Activated CD4-positive, alpha-beta T cell treated with anti-CD3 and anti-CD28 coated beads for 36 hours (primary cell): ENCODE measurements at regions of chrX and their contacts with region 1.

Region 1: DNA sequence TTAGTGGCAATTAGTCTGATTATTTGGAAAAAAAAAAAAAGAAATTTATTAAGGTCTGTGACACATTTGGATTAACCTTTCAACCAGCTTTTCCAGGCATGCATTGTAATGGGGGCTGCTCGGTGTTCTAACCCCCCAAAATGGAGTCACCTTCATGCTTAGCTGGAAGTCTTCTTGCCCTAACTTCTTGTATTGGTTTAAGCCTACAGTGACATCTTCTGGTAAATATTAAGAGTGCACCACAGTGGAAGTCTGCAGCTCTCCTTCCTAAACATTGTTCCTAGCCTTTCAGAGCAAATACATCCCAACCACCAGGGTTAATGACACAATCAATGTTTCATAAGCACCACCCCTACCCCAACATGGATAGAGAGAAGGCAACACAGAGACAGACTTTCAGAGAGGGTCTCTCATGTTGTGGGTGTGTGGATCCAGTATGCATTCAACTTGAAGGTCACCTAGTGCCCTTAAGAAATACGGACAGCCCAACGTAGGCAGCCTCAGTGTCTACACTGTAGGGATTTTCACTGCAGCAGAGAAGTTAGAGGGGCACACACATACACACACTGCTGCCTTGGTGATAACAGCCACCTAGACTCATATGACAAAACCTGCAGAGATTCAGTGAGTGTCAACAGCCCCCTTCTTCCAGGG is 142.9 kb upstream of the MBNL3 start:
- DNase-seq: no peak
- ATAC-seq: no peak
- H3K4me3 Mint-ChIP-seq: no peak overlapping the region
- H3K27ac Mint-ChIP-seq: no peak overlapping the region
- H3K4me1 Mint-ChIP-seq: no peaks in the 10 kb centered on the region
- H3K27me3 Mint-ChIP-seq: no peaks in the 10 kb centered on the region

Region 2: DNA sequence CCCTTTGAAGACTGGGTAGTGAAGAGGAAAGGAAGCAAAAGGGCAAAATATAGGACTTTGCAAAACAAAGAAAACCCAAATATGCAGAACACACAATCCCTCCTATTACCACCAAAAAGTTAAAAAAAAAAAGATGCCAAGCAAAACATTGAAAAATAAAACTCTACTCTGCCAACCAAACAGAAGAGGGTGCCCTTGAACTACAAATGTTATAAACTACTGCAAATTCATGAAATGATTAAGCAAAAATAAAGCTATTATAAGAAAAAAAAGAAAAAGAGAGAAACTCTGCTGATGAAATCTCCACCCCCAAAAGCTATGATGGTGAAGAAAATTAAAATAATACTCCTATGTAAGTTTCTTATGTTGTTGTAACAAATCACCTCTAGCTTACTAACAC is 777.1 kb before region 1 on chrX:
- CTCF ChIA-PET with region 1: no interaction called
- POLR2A ChIA-PET with region 1: no interaction called
- intact Hi-C with region 1: loop called in 1 of 2 experiments (anchors 5 kb)
- DNase-seq: no peak
- ATAC-seq: no peak
- H3K4me3 Mint-ChIP-seq: no peak overlapping the region
- H3K27ac Mint-ChIP-seq: no peak overlapping the region
- H3K4me1 Mint-ChIP-seq: no peaks in the 10 kb centered on the region
- H3K27me3 Mint-ChIP-seq: no peaks in the 10 kb centered on the region

Region 3: DNA sequence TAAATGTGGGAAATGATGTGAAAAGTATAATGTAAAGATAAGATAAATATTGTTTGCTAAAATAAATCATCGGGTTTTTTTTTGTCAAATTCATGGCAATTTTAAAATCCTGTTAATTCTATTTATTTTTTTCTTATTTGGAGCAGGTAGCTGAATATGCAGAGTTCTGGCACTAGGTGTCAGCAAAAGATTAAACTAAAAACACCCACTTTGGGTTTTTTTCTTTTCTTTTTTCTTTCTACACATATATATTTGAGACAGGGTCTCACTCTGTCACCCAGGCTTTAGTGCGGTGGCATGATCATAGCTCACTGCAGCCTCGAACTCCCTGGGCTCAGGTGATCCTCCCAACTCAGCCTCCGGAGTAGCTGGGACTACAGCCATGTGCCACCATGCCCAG is 405.5 kb before region 1 on chrX:
- CTCF ChIA-PET with region 1: interaction called, 6 read pairs
- POLR2A ChIA-PET with region 1: no interaction called
- intact Hi-C with region 1: loop called in 1 of 2 experiments (anchors 5 kb)
- DNase-seq: no peak
- ATAC-seq: no peak
- H3K4me3 Mint-ChIP-seq: no peak overlapping the region
- H3K27ac Mint-ChIP-seq: no peak overlapping the region
- H3K4me1 Mint-ChIP-seq: peaks cover 21% of the 10 kb centered on the region
- H3K27me3 Mint-ChIP-seq: no peaks in the 10 kb centered on the region

Region 4: DNA sequence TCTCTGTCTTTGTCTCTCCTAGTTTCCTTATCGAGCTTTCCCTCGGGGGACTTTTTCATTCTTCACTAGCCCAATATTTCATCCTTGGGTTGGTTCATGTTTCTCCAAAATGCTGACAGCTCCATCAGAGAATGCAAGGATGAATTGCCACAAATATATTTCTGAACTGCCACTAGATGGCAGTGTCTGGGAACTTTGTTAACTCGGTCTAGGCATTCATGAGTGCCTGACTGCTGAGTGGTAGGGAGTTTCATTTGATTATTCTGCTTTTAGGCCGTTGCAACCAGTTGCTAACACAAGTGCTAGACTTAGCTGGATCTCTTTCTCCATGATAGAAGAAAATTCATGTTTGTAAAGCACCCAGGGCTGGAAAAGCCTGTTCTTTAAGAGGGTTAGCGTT is 338.9 kb before region 1 on chrX:
- CTCF ChIA-PET with region 1: interaction called, 6 read pairs
- POLR2A ChIA-PET with region 1: no interaction called
- intact Hi-C with region 1: loop called (anchors 1 to 2 kb)
- DNase-seq: peak; percentile 28
- ATAC-seq: peak; percentile 39
- H3K4me3 Mint-ChIP-seq: no peak overlapping the region
- H3K27ac Mint-ChIP-seq: no peak overlapping the region
- H3K4me1 Mint-ChIP-seq: no peaks in the 10 kb centered on the region
- H3K27me3 Mint-ChIP-seq: no peaks in the 10 kb centered on the region

Region 5: GRCh38 chrX:132774001-132774714 is 142.5 kb after region 1 on chrX:
- CTCF ChIA-PET with region 1: no interaction called
- POLR2A ChIA-PET with region 1: no interaction called
- intact Hi-C with region 1: no loop called
- DNase-seq: no peak
- ATAC-seq: no peak
- H3K4me3 Mint-ChIP-seq: no peak overlapping the region
- H3K27ac Mint-ChIP-seq: no peak overlapping the region
- H3K4me1 Mint-ChIP-seq: peaks cover 27% of the 10 kb centered on the region
- H3K27me3 Mint-ChIP-seq: no peaks in the 10 kb centered on the region

Region 6: DNA sequence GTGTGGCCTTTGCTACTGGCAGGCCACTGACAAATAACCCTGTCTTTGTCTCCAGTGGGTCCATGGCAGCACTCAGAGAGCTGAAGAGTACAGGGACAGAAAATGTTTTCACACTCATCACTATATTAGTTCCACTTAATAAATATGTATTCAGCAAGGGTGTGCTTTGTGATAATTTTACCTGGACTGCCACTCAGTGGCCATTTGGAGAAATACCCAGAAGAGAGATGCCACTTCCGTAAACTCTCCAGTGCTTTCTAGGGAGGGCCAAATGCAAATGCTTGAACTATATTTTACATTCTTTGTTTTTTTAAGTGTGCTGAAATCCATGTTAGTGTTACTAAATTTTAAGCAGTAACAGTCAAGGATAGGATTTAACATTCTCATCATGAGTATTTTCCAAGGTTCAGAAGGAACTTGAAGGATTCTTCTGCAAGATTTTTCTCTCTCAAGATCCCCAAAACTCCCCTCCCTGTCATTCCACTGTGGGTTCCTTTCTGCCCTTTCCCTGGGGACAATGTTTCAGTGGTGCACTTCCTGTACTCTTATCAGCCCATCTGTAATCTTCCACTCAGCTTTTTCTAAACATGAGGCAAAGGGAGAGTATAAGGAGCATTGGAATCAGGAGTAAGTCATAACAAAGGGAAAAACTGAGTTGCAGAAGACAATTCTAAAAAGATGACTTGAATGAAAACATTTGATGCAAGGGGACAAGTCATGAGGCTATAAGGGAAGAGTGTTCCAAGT is 540.4 kb after region 1 on chrX:
- CTCF ChIA-PET with region 1: no interaction called
- POLR2A ChIA-PET with region 1: no interaction called
- intact Hi-C with region 1: loop called (anchors 5 to 10 kb)
- DNase-seq: no peak
- ATAC-seq: no peak
- H3K4me3 Mint-ChIP-seq: no peak overlapping the region
- H3K27ac Mint-ChIP-seq: no peak overlapping the region
- H3K4me1 Mint-ChIP-seq: no peaks in the 10 kb centered on the region
- H3K27me3 Mint-ChIP-seq: peaks cover 5% of the 10 kb centered on the region

Region 7: DNA sequence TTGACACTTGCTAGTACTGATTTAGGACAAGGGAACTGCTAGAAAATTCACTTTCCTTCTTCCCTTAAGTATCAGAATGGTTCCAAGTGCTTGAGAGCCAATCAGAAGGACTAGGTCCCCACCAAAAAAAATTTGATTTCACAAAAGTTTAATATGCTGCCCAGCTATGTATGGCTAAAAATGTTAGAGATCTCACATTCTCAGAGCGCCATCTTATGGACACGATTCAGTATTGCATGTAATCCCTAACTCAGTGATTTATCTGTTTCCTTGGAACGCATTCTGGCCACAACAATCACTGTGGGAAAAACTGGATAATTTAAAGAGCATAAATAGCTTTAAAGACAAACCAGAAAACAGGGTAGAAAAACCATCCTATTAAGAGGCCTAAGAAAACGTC is 1038.7 kb after region 1 on chrX:
- CTCF ChIA-PET with region 1: interaction called, 4 read pairs
- POLR2A ChIA-PET with region 1: no interaction called
- intact Hi-C with region 1: loop called in 1 of 2 experiments (anchors 5 kb)
- DNase-seq: no peak
- ATAC-seq: no peak
- H3K4me3 Mint-ChIP-seq: no peak overlapping the region
- H3K27ac Mint-ChIP-seq: no peak overlapping the region
- H3K4me1 Mint-ChIP-seq: no peaks in the 10 kb centered on the region
- H3K27me3 Mint-ChIP-seq: no peaks in the 10 kb centered on the region